Adrenal gland (tissue), 19 donors: ENCODE measurements at regions of chr12 and their contacts with region 1.

Region 1: GRCh38 chr12:121678716-121679580 is 9.5 kb upstream of the MORN3 start:
- DNase-seq: no peak
- H3K4me3 ChIP-seq: no peak overlapping the region
- H3K27ac ChIP-seq: no peak overlapping the region
- H3K4me1 ChIP-seq: no peaks in the 10 kb centered on the region
- H3K27me3 ChIP-seq: no peaks in the 10 kb centered on the region
- CTCF ChIP-seq: no peak
- POLR2A ChIP-seq: no peak

Region 2: DNA sequence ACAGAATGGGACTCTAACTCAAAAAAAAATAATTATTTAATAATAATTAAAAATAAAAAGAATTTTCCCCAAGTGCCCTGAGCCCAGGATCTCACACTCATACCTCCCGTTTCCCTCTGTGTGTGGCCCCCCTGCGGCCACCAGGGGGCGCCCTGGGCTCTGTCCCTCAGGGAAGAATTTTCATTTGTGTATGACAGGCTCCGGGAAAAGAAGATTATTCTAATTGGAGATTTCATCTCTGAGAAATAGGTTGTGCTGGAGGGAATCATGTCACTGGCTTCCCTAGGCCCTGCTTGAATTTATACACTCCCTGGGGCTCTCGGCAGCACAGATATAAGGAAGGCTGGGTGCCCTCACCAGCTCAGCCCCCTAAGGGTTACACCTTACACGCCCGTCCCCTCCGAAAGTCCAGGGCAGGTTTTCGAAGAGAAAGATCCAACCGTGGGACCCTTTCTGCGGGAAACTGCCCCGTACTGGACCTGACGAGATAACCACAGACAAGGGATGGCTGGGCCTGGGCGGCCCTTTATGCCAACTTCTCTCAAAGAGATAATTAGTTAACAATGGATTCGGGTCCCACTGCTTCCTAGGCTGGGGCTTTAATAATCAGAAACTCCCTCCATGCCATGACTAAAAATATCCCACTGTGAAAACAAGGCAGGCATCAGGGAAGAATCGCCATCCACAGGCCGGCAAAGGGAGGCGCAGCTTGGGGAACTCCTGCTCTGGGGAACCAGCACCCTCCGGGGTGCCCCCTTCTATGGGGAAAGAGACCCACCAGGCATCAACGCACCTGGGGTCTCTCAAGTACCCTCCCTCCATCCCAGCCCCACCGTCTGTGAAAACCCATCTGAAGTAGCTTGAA is 178.8 kb before region 1 on chr12:
- intact Hi-C with region 1: loop called (anchors 5 to 10 kb)
- DNase-seq: peak; percentile 69 to 90 (median 81)
- H3K4me3 ChIP-seq: no peak overlapping the region
- H3K27ac ChIP-seq: peak overlapping the region in 1 of 5 donors; percentile 71
- H3K4me1 ChIP-seq: peaks cover 0 to 6% of the 10 kb centered on the region in 2 donors
- H3K27me3 ChIP-seq: no peaks in the 10 kb centered on the region
- CTCF ChIP-seq: peak; percentile 77 to 100 (median 88)
- POLR2A ChIP-seq: no peak

Region 3: DNA sequence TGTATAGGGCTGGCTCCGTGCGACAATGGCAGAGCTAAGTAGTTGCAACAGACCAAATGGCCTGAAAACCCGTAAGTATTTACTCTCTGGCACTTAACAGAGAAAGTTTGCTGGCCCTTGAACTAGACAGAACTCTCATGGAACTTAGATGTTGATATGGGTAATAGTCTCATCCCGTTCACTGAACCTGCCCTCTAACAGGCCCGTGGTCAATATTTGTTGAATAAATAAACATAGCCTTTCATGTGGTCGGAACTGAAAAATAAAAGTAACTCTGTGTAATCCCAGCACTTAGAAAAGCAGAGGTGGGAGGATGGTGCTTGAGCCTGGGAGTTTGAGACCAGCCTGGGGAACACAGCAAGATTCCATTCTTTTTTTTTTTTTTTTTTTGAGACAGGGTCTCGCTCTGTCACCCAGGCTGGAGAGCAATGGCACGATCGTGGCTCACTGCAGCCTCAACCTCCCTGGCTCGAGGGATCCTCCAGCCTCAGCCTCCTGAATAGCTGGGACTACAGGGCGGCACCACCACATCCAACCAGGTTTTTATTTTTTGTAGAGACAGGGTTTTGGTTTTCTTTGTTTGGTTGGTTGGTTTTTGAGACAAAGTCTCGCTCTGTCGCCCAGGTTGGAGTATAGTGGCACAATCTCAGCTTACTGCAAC is 127.8 kb before region 1 on chr12:
- intact Hi-C with region 1: loop called (anchors 2 to 5 kb)
- DNase-seq: no peak
- H3K4me3 ChIP-seq: no peak overlapping the region
- H3K27ac ChIP-seq: no peak overlapping the region
- H3K4me1 ChIP-seq: no peaks in the 10 kb centered on the region
- H3K27me3 ChIP-seq: no peaks in the 10 kb centered on the region
- CTCF ChIP-seq: no peak
- POLR2A ChIP-seq: no peak

Region 4: DNA sequence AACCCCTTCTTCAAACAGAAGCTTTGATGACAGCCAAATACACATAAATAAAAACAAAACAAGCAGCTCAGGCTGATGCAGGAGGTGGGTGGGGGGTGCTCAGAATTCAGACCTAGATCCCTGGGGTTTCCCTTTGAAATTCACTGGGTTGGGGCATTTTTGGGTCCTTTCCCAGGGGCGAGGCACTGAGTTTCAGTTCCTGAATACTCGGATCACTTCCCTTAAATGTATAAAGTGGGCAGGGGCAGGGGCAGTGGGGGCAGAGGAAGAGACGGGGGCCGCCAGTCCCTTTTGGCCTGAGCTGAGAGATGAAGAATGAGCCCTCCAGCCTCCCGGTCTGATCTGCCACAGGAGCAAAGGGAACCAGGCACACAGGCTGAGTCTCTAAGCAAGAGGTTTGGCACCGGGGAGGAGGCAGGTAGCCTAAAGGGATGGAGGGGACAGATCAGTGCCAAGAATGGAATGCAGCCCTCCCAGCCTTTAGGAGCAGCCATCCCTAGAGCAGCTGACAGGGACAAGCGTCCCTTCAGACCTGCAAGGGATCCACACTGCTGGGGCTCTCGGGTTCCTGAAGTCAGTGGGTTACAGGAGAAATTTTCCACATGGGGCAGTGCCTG is 118.4 kb before region 1 on chr12:
- intact Hi-C with region 1: loop called in 1 of 2 experiments (anchors 2 kb)
- DNase-seq: no peak
- H3K4me3 ChIP-seq: no peak overlapping the region
- H3K27ac ChIP-seq: no peak overlapping the region
- H3K4me1 ChIP-seq: no peaks in the 10 kb centered on the region
- H3K27me3 ChIP-seq: no peaks in the 10 kb centered on the region
- CTCF ChIP-seq: no peak
- POLR2A ChIP-seq: no peak

Region 5: DNA sequence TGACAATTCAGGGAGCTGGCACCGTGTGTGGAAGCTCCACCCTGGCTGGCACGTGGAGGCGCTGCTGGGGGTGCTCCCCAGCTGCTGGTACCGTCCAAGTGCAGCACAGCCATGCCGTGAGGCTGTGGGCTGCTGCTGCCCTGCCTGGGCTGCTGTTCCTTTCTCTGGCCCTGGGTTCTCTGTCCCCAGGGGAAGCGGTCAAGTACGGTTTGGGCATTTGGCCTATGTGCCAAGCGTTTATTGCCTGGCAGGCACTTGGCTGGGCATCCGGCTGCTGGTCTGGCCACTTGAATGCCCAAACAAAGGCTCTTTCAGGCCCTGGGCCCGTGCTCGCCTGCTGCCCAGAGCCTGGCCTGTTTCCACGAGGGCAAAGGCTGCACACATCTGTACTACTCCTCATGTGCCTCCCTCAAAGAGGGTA is 74.9 kb after region 1 on chr12:
- intact Hi-C with region 1: no loop called
- DNase-seq: no peak
- H3K4me3 ChIP-seq: no peak overlapping the region
- H3K27ac ChIP-seq: no peak overlapping the region
- H3K4me1 ChIP-seq: peaks cover 6% of the 10 kb centered on the region in 2 donors
- H3K27me3 ChIP-seq: no peaks in the 10 kb centered on the region
- CTCF ChIP-seq: no peak
- POLR2A ChIP-seq: no peak